Heart left ventricle (tissue), 16 donors: ENCODE measurements at regions of chr20 and their contacts with region 1.

Region 1: DNA sequence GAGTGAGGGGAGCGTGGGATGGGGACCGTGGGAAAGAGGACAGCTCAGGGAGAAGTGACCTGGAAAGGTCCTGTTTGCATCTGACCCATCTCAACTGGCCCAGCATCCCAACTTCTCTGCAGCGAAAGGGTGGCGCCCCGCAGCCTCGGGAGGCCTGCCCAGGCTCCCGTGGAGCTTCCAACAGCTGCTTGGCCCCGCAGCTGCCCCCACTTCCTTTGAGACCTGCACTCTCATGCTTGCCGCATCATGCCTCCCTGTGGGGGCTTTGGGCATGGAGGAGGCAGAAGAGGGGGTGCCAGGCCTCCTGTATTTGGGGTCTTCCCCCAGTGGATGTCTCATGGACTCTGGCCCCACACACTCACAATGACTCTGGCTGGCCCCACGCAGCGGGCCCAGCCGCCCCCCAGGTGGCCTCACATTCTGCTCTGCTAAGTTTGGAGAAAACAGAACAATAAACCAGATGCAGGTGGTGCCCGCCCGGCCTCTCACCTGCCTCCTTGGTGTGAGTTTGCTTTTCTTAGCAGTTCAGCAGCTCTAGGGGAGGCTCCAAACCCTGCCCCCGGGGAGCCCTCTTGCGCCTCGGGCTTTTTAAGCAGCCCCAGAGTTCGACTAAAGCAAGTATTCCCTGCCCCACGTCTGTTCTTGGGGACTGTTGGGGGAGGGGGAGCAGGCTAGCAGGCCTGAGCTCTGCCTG is 40.7 kb downstream of the CPXM1 start:
- DNase-seq: no peak
- ATAC-seq: no peak
- H3K4me3 ChIP-seq: no peak overlapping the region
- H3K27ac ChIP-seq: no peak overlapping the region
- H3K4me1 ChIP-seq: no peaks in the 10 kb centered on the region
- H3K27me3 ChIP-seq: peaks cover 0 to 57% (median 16%) of the 10 kb centered on the region in 9 donors
- CTCF ChIP-seq: no peak
- POLR2A ChIP-seq: no peak

Region 2: GRCh38 chr20:2713285-2713684 is 46.5 kb before region 1 on chr20:
- intact Hi-C with region 1: no loop called
- DNase-seq: no peak
- ATAC-seq: no peak
- H3K4me3 ChIP-seq: no peak overlapping the region
- H3K27ac ChIP-seq: no peak overlapping the region
- H3K4me1 ChIP-seq: no peaks in the 10 kb centered on the region
- H3K27me3 ChIP-seq: no peaks in the 10 kb centered on the region
- CTCF ChIP-seq: peak in 3 of 12 donors; percentile 5 to 19 (median 8)
- POLR2A ChIP-seq: no peak

Region 3: GRCh38 chr20:2742934-2743559 is 16.7 kb before region 1 on chr20:
- intact Hi-C with region 1: no loop called
- DNase-seq: peak in 2 of 5 donors; percentile 32 to 36
- ATAC-seq: peak in 3 of 4 donors; percentile 37 to 55 (median 54)
- H3K4me3 ChIP-seq: no peak overlapping the region
- H3K27ac ChIP-seq: peak overlapping the region in 1 of 12 donors; percentile 32
- H3K4me1 ChIP-seq: peaks cover 0 to 9% (median 0%) of the 10 kb centered on the region in 12 donors
- H3K27me3 ChIP-seq: peaks cover 0 to 5% (median 0%) of the 10 kb centered on the region in 9 donors
- CTCF ChIP-seq: peak; percentile 47 to 90 (median 66)
- POLR2A ChIP-seq: no peak

Region 4: DNA sequence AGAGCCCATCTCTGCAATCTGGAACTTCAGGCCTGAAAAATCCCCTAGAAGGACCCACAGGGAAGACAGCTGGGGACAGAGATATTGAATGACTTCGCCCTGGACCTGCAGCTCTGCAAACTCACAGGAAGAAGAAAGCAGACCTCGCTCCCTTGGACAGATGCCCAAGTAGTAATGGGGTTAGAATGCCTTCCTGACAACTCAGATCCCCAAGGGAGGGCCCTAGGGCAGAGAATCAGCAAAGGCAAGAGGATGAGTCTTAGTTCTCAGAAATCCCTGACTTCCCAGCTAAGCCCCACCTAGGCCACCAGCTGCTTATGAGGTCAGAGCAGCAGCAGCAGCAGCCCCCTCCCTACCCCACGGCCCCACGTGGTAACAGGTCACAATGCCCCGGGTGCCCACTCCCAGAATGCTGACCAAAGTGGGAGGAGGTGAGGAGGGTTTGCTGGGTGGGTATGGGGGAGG is 54.9 kb after region 1 on chr20 and contains the start of gene C20orf141:
- intact Hi-C with region 1: loop called in 1 of 10 experiments (anchors 5 kb)
- DNase-seq: peak in 2 of 5 donors; percentile 50 to 73
- ATAC-seq: peak in 3 of 4 donors; percentile 37 to 63 (median 42)
- H3K4me3 ChIP-seq: no peak within 1 kb of the TSS
- H3K27ac ChIP-seq: peak within 1 kb of the TSS in 1 of 12 donors; percentile 49
- H3K4me1 ChIP-seq: peaks cover 0 to 8% (median 0%) of the 10 kb centered on the region in 12 donors
- H3K27me3 ChIP-seq: peaks cover 0 to 34% (median 2%) of the 10 kb centered on the region in 9 donors
- CTCF ChIP-seq: no peak
- POLR2A ChIP-seq: no peak
- total RNA-seq, gene C20orf141: not detected